Astrocyte of the cerebellum (primary cell): ENCODE measurements at regions of chr6 and their contacts with region 1.

Region 1: DNA sequence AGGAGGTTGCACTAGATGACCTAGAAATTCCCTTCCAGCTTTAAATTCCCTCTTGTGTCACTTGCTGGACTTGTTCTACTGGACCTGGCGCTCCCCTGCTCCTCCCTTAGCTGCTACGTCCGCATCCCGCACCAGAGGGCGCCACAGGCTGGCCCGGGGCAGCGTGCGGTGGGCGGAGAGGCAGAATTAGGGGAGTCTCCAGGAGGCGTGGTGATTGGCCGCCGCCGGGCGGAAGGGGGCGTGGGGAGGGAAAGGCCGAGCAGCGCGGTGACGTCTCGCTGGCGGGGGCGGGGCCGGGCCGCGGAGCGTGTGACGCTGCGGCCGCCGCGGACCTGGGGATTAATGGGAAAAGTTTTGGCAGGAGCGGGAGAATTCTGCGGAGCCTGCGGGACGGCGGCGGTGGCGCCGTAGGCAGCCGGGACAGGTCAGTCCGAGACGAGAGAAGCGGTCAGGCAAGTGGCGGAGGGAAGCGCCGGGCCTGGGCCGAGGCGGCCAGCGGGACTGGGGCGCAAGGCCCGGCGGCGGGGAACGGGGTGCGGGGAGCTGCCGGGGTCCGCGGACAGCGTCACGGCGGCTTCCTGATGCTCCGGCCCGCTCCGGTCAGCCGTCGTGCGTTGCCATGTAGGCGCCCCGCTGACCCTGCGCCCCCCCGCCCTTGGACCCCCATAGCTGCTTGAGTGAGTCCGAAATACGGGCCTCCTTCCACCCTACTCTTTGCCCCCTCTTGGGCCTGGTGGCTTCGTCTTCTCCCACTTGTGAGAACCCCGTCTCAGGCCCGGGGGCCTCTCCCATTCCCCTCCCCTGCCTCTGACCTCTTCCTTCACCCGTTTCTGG is at the start of gene PPARD:
- DNase-seq: peak; percentile 90
- H3K4me3 ChIP-seq: peak within 1 kb of the TSS; percentile 52
- CTCF ChIP-seq: peak; percentile 98

Region 2: GRCh38 chr6:35443341-35444030 is 101.0 kb after region 1 on chr6:
- in situ Hi-C with region 1: loop called (anchors 5 kb)
- DNase-seq: no peak
- H3K4me3 ChIP-seq: no peak overlapping the region
- CTCF ChIP-seq: no peak